Activated CD4-positive, alpha-beta T cell treated with anti-CD3 and anti-CD28 coated beads for 36 hours (primary cell): ENCODE measurements at regions of chr16 and their contacts with region 1.

Region 1: DNA sequence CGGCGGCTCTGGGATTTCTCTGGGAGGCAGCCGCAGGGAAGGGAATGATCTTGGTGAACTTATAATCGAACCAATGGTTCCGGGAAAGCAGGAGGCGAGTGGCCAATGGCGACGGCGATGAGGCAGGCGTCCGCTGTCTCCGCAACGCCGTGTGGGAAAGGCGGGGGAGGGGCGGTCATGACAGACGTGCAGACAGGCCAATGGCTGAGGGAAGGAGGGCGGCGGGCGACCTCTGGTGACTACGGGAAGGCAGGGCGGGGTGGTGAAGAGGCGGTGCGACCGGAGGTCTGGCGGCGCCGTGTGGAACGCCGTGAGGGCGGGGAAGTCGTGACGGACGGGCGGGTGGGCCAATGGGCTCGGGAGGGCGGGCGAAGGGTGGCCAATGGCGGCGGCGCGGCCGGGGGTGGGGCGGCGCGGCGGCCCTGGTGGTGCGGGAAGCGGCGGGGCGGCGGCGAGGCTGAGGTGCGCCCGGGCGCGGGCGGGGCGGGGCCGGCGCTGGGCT is at the start of gene RAB40C:
- DNase-seq: peak; percentile 100
- ATAC-seq: peak; percentile 88
- H3K4me3 Mint-ChIP-seq: peak within 1 kb of the TSS; percentile 79
- H3K27ac Mint-ChIP-seq: peak within 1 kb of the TSS; percentile 100
- H3K4me1 Mint-ChIP-seq: peaks cover 22% of the 10 kb centered on the region
- H3K27me3 Mint-ChIP-seq: no peaks in the 10 kb centered on the region
- total RNA-seq, gene RAB40C: 8.9 to 9.6 TPM

Region 2: GRCh38 chr16:381789-382717 is 207.7 kb before region 1 on chr16 and contains the start of gene PGAP6:
- CTCF ChIA-PET with region 1: no interaction called
- POLR2A ChIA-PET with region 1: no interaction called
- intact Hi-C with region 1: loop called in 1 of 2 experiments (anchors 5 kb)
- DNase-seq: peak; percentile 83
- ATAC-seq: peak; percentile 73
- H3K4me3 Mint-ChIP-seq: peak within 1 kb of the TSS; percentile 74
- H3K27ac Mint-ChIP-seq: no peak within 1 kb of the TSS
- H3K4me1 Mint-ChIP-seq: peaks cover 24% of the 10 kb centered on the region
- H3K27me3 Mint-ChIP-seq: no peaks in the 10 kb centered on the region
- total RNA-seq, gene PGAP6: 22.9 to 40.8 TPM

Region 3: GRCh38 chr16:527006-527753 is 62.5 kb before region 1 on chr16 and contains the start of gene CAPN15:
- CTCF ChIA-PET with region 1: no interaction called
- POLR2A ChIA-PET with region 1: interaction called, 7 read pairs
- intact Hi-C with region 1: loop called (anchors 1 kb)
- DNase-seq: peak; percentile 91
- ATAC-seq: peak; percentile 71
- H3K4me3 Mint-ChIP-seq: peak within 1 kb of the TSS; percentile 94
- H3K27ac Mint-ChIP-seq: peak within 1 kb of the TSS; percentile 96
- H3K4me1 Mint-ChIP-seq: peaks cover 35% of the 10 kb centered on the region
- H3K27me3 Mint-ChIP-seq: no peaks in the 10 kb centered on the region
- total RNA-seq, gene CAPN15: 64.7 to 69.7 TPM

Region 4: DNA sequence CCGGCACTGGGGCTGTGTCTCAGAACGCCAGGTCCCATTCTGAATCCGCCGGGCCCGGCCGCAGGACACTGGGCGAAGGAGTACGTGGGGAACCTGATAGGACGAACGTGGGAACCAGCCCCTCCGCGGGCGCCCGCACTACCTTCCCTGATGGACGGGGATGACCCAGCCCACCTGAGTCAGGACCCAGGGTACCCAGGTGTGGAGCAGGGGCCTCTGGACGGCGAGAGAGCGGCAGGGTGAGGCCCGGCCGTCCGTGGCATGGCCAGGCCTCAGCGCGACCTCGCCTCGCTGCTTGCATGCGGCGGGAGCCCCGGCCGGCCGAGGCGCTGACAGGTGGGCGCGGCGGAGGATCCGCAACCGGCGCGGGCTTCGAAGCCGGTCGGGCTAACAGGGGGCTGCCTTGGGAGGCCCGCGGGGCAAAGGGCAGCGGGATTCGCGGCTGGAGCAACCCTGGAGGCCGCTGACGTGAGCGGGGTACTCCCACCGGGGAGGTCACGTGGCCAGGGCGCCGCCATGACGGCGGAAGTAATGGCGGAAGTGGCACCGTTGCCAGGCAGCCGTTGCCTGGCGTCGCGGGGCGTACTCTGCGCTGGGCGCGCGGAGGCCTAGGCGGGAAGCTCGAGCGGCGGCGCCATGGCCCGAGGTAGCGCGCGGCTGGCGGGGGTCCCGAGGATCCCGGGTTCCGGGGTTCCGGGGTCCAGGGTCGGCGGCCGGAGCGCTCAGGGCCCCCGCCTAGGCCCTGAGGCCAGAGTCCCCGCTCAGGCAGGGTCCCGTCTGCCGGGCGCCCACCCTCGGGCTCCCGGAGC is 59.3 kb after region 1 on chr16 and contains the start of gene WDR90:
- CTCF ChIA-PET with region 1: interaction called, 3 read pairs
- POLR2A ChIA-PET with region 1: no interaction called
- intact Hi-C with region 1: loop called in 1 of 2 experiments (anchors 1 kb)
- DNase-seq: peak; percentile 96
- ATAC-seq: peak; percentile 92
- H3K4me3 Mint-ChIP-seq: peak within 1 kb of the TSS; percentile 81
- H3K27ac Mint-ChIP-seq: peak within 1 kb of the TSS; percentile 73
- H3K4me1 Mint-ChIP-seq: peaks cover 15% of the 10 kb centered on the region
- H3K27me3 Mint-ChIP-seq: no peaks in the 10 kb centered on the region
- total RNA-seq, gene WDR90: 43.6 to 55.9 TPM

Region 5: GRCh38 chr16:740764-741505 is 151.2 kb after region 1 on chr16 and contains the start of gene CIAO3:
- CTCF ChIA-PET with region 1: no interaction called
- POLR2A ChIA-PET with region 1: no interaction called
- intact Hi-C with region 1: loop called in 1 of 2 experiments (anchors 2 kb)
- DNase-seq: peak; percentile 96
- ATAC-seq: peak; percentile 72
- H3K4me3 Mint-ChIP-seq: peak within 1 kb of the TSS; percentile 76
- H3K27ac Mint-ChIP-seq: peak within 1 kb of the TSS; percentile 51
- H3K4me1 Mint-ChIP-seq: peaks cover 22% of the 10 kb centered on the region
- H3K27me3 Mint-ChIP-seq: no peaks in the 10 kb centered on the region
- total RNA-seq, gene CIAO3: 28.3 to 31.9 TPM

Region 6: GRCh38 chr16:1182316-1182671 is 592.6 kb after region 1 on chr16:
- CTCF ChIA-PET with region 1: no interaction called
- POLR2A ChIA-PET with region 1: no interaction called
- intact Hi-C with region 1: no loop called
- DNase-seq: no peak
- ATAC-seq: no peak
- H3K4me3 Mint-ChIP-seq: no peak overlapping the region
- H3K27ac Mint-ChIP-seq: no peak overlapping the region
- H3K4me1 Mint-ChIP-seq: no peaks in the 10 kb centered on the region
- H3K27me3 Mint-ChIP-seq: no peaks in the 10 kb centered on the region

Region 7: GRCh38 chr16:1413684-1414531 is 824.2 kb after region 1 on chr16:
- CTCF ChIA-PET with region 1: no interaction called
- POLR2A ChIA-PET with region 1: no interaction called
- intact Hi-C with region 1: loop called in 1 of 2 experiments (anchors 5 kb)
- DNase-seq: peak; percentile 85
- ATAC-seq: peak; percentile 72
- H3K4me3 Mint-ChIP-seq: peak overlapping the region; percentile 81
- H3K27ac Mint-ChIP-seq: peak overlapping the region; percentile 81
- H3K4me1 Mint-ChIP-seq: peaks cover 24% of the 10 kb centered on the region
- H3K27me3 Mint-ChIP-seq: no peaks in the 10 kb centered on the region